ENCODE measurements at regions of chr11 and their contacts with region 1.

Region 1: GRCh38 chr11:46786110-46786509 is 60.0 kb downstream of the CKAP5 start:
- DNase-seq: no peak
- ATAC-seq: no peak
- H3K4me3 ChIP-seq: no peak overlapping the region
- H3K27ac ChIP-seq: no peak overlapping the region
- H3K4me1 ChIP-seq: no peaks in the 10 kb centered on the region
- H3K27me3 ChIP-seq: no peaks in the 10 kb centered on the region
- CTCF ChIP-seq: no peak
- EP300 ChIP-seq: no peak
- POLR2A ChIP-seq: no peak
- RAD21 ChIP-seq: no peak

Region 2: GRCh38 chr11:46696212-46696558 is 89.9 kb before region 1 on chr11:
- CTCF ChIA-PET with region 1: no interaction called
- POLR2A ChIA-PET with region 1: no interaction called
- in situ Hi-C with region 1: no loop called
- intact Hi-C with region 1: no loop called
- DNase-seq: no peak
- ATAC-seq: no peak
- H3K4me3 ChIP-seq: no peak overlapping the region
- H3K27ac ChIP-seq: no peak overlapping the region
- H3K4me1 ChIP-seq: peaks cover 24 to 33% of the 10 kb centered on the region in 2 experiments; a peak in 4 of 5 replicates
- H3K27me3 ChIP-seq: no peaks in the 10 kb centered on the region
- CTCF ChIP-seq: no peak
- EP300 ChIP-seq: no peak
- POLR2A ChIP-seq: no peak
- RAD21 ChIP-seq: no peak

Region 3: GRCh38 chr11:46755962-46756361 is 30.1 kb before region 1 on chr11:
- CTCF ChIA-PET with region 1: no interaction called
- POLR2A ChIA-PET with region 1: interaction called, 4 read pairs
- in situ Hi-C with region 1: no loop called
- intact Hi-C with region 1: loop called (anchors 5 kb)
- DNase-seq: no peak
- ATAC-seq: no peak
- H3K4me3 ChIP-seq: no peak overlapping the region
- H3K27ac ChIP-seq: no peak overlapping the region
- H3K4me1 ChIP-seq: no peaks in the 10 kb centered on the region
- H3K27me3 ChIP-seq: no peaks in the 10 kb centered on the region
- CTCF ChIP-seq: no peak
- EP300 ChIP-seq: no peak
- POLR2A ChIP-seq: no peak
- RAD21 ChIP-seq: no peak

Region 4: DNA sequence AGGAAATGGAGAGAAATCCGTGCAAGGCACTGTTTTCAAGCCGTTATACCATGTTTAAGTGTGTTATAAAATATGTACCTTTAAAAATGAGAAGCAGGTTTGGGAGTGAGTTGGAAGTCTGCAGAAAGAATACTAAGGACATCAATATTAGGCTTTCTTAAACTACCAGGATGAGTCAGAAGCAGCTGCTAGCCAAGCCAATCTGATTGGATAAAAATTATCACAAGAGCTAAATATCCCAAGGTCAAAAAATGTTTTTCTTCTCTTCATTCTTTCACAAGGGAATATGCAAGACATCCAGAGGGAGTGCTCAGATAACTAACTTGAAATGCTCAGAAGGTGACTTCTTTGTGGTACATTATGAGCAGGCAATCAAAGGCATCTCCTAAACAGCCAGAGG is 79.2 kb after region 1 on chr11:
- CTCF ChIA-PET with region 1: no interaction called
- POLR2A ChIA-PET with region 1: no interaction called
- in situ Hi-C with region 1: no loop called
- intact Hi-C with region 1: no loop called
- DNase-seq: no peak
- ATAC-seq: no peak
- H3K4me3 ChIP-seq: no peak overlapping the region
- H3K27ac ChIP-seq: no peak overlapping the region
- H3K4me1 ChIP-seq: no peaks in the 10 kb centered on the region
- H3K27me3 ChIP-seq: peaks cover 19 to 30% of the 10 kb centered on the region in 2 experiments; a peak in 4 of 5 replicates
- CTCF ChIP-seq: no peak
- EP300 ChIP-seq: no peak
- POLR2A ChIP-seq: no peak
- RAD21 ChIP-seq: no peak

Measured in K562 (cell line).